GM13976 (cell line): ENCODE measurements at regions of chr3 and their contacts with region 1.

Region 1: DNA sequence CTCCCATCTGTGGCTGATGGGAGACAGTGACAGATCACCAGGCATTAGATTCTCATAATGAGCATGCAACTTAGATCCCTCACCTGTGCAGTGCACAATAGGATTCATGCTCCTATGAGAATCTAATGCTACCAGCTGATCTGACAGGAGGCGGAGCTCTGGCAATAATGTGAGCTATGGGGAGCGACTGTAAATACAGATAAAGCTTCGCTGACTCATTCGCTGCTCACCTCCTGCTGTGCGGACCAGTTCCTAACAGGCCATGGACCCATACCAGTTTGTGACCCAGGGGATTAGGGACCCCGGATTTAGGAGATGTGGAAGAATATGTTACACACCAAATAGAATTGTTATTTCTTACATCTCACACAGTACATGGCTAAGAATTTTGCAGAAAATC is 6.7 kb downstream of the ARGFX start:
- DNase-seq: no peak
- CTCF ChIP-seq: no peak

Region 2: GRCh38 chr3:121995161-121996137 is 421.0 kb after region 1 on chr3:
- in situ Hi-C with region 1: loop called (anchors 25 kb)
- DNase-seq: no peak
- CTCF ChIP-seq: peak; percentile 58

Region 3: GRCh38 chr3:122200661-122201060 is 626.2 kb after region 1 on chr3:
- in situ Hi-C with region 1: no loop called
- DNase-seq: no peak
- CTCF ChIP-seq: no peak